H1 (cell line): ENCODE measurements at regions of chr9 and their contacts with region 1.

Region 1: DNA sequence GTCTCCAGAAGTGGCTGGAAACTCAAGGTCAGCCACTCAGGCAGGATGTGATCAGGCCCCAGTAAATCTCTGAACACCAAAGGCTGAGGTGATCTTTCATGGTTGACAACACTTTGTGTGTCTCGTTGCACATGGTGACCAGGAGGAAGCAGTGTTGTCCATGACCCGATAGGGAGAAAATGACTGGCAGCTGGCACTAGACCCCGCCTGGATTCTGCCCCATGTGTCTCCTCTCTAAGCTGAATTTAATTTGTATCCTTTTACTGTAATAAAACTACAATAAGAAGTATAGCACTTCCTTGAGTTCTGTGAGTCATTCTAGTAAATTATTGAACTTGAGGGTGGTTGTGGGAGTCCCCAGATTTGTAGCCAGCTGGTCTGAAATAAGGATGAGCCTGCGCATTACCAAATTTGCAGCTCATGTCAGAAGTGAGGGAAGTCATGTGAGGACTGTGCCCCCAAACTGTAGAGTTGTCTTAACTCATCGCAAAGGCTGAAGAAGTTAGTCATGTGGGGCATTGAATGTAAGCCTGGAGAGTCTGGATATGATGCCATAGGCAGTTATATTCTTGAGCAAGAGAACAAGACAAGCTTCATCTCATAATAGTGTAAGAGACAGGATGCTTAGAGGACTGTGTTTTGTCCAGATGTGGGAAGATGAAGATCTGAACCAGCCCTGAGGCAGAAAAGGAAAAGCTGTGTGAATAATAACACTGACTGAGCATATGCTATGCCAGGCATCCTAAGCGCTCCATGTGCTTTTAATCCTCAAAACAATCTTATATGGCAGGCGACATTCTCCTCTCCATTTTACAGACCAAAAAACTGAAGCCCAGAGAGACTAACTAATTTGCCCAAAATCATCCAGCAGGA is 55.9 kb downstream of the TMEM215 start:
- DNase-seq: no peak
- H3K4me3 ChIP-seq: no peak overlapping the region
- H3K27ac ChIP-seq: no peak overlapping the region
- H3K4me1 ChIP-seq: 0 out of 7 replicates have a peak, but pooled peaks cover 0 to 2% (median 0%) of the 10 kb centered on the region in 4 experiments
- H3K27me3 ChIP-seq: peaks cover 0 to 1% (median 0%) of the 10 kb centered on the region in 4 experiments; a peak in 1 of 7 replicates
- CTCF ChIP-seq: peak in 1 of 3 experiments; percentile 6; a peak in 2 of 4 replicates
- EP300 ChIP-seq: no peak
- POLR2A ChIP-seq: no peak
- RAD21 ChIP-seq: peak; percentile 15; a peak in 2 of 4 replicates

Region 2: DNA sequence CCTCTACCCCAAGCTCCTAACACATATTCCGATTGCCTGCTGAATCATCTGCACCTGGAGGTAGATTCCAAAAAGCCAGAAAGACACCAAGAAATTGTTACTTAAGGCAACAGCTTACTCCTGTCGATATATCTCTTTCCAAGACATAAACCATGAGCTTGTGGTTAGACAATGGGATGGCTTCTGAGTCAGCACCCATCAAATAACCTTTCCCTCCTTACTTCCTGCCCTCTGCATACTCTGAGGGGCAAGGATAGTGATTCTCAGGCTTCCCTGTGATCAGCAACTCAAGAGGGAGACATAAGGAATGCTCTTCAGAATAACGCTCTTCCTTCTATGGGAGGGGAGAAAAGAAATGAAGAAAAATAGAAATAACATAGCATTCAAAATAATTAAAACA is 15.0 kb after region 1 on chr9:
- CTCF ChIA-PET with region 1: interaction called, 21 read pairs
- POLR2A ChIA-PET with region 1: no interaction called
- DNase-seq: no peak
- H3K4me3 ChIP-seq: no peak overlapping the region
- H3K27ac ChIP-seq: no peak overlapping the region
- H3K4me1 ChIP-seq: no peaks in the 10 kb centered on the region
- H3K27me3 ChIP-seq: no peaks in the 10 kb centered on the region
- CTCF ChIP-seq: no peak
- EP300 ChIP-seq: no peak
- POLR2A ChIP-seq: no peak
- RAD21 ChIP-seq: no peak

Region 3: GRCh38 chr9:32968101-32969011 is 129.1 kb after region 1 on chr9:
- CTCF ChIA-PET with region 1: interaction called, 19 read pairs
- POLR2A ChIA-PET with region 1: no interaction called
- DNase-seq: peak in 1 of 2 experiments; percentile 81
- H3K4me3 ChIP-seq: no peak overlapping the region
- H3K27ac ChIP-seq: no peak overlapping the region
- H3K4me1 ChIP-seq: peaks cover 0 to 3% (median 0%) of the 10 kb centered on the region in 4 experiments; a peak in 1 of 7 replicates
- H3K27me3 ChIP-seq: no peaks in the 10 kb centered on the region
- CTCF ChIP-seq: peak in 2 of 3 experiments; percentile 55 to 61; a peak in 3 of 4 replicates
- EP300 ChIP-seq: no peak
- POLR2A ChIP-seq: no peak
- RAD21 ChIP-seq: peak; percentile 77 to 79